GM18951 (cell line): ENCODE measurements at regions of chr15 and their contacts with region 1.

Region 1: DNA sequence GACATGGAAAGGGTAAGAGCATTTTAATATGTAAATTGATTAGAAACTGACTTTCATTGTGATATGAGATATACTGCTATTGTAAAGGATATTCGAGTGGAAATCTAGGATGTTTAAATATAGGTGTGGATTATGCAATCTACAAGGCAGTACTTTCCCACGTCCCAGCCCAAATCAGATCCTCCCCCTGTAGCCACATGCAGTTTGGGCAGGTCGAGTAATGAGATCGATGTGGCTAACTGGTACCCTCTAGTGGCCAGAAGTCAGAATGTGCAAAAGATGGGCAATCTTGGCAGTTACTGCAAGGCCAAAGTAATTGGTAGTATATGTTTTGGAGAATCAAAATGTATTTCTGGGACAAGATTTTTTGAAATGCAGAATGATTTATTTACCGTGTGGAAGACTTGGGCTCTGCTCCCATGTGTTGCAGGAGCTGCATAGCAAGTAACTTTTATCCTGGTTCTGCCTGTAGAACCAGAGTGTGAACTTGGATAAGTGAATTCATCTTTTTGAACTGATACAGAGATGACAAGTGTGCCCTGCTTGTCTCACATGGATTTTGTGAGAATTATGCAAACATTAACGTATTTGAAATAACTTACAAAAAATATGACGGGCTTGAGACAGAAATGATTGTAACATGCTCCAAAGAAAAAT is 94.5 kb upstream of the ADAMTSL3 start:
- POLR2A ChIP-seq: no peak

Region 2: GRCh38 chr15:83248151-83249029 is 311.0 kb before region 1 on chr15:
- in situ Hi-C with region 1: loop called (anchors 25 kb)
- POLR2A ChIP-seq: no peak

Region 3: DNA sequence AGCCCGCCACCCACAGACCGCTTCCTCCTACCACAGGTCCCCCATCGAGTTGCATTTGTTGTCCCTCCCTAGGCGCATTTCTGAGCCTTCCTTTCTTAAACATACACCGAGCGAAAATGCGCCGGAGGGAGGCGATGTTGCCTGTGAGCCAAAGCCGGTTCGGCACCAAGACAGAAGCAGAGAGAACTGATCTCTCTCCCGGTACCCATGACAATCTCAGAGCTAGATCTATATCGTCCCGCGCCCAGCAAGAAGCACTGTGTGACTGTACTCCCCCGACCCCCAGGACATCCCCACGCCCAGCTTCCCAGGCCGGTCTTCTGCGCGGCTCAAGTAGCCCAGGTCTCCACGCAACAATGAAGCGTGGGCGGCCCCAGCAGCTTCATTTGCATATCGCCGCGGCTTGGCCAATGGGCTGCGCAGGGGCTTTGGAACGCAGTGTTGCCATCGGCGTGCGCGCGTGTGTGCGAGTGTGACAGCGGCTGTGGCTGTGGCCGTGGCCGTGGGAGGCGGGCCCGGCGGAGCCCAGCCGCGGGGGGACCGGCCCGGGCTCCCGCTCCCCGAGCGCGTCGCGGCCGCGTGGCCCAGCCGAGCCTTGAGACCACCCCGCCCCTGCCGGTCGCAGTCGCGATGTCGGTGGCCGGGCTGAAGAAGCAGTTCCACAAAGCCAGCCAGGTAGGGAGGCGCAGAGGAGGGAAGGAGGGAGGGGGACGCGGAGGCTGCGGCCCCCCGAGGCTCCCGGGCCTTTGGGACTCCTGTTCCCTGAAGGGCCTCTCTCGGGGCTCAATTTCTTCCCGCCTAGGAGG is 112.3 kb before region 1 on chr15 and contains the start of gene SH3GL3:
- in situ Hi-C with region 1: loop called (anchors 25 kb)
- POLR2A ChIP-seq: no peak

Region 4: DNA sequence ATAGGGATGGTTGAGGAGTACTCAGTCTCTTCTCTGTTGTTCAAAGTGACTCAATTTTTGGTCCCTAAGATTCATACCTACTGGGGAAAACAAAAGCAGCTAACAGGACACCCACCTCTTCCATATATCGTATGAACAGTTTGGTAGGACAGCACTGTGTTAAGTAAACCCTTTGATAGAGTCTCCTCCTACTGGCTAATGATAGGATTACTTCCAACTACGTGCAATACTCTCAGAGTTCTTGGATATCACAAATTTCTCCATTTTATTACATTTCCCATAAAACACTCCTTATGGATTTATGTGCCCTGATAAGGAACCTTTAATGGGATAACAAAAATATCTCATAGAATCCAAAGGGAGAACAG is 475.9 kb after region 1 on chr15:
- in situ Hi-C with region 1: loop called (anchors 25 kb)
- POLR2A ChIP-seq: no peak